Calu3 (cell line): ENCODE measurements at regions of chr15 and their contacts with region 1.

Region 1: GRCh38 chr15:51499379-51499976 is 123.1 kb downstream of the DMXL2 start:
- DNase-seq: peak; percentile 11
- H3K4me3 Mint-ChIP-seq: no peak overlapping the region
- H3K27ac Mint-ChIP-seq: no peak overlapping the region
- H3K4me1 Mint-ChIP-seq: peaks cover 13% of the 10 kb centered on the region
- H3K27me3 Mint-ChIP-seq: no peaks in the 10 kb centered on the region
- CTCF ChIP-seq: peak; percentile 35

Region 2: DNA sequence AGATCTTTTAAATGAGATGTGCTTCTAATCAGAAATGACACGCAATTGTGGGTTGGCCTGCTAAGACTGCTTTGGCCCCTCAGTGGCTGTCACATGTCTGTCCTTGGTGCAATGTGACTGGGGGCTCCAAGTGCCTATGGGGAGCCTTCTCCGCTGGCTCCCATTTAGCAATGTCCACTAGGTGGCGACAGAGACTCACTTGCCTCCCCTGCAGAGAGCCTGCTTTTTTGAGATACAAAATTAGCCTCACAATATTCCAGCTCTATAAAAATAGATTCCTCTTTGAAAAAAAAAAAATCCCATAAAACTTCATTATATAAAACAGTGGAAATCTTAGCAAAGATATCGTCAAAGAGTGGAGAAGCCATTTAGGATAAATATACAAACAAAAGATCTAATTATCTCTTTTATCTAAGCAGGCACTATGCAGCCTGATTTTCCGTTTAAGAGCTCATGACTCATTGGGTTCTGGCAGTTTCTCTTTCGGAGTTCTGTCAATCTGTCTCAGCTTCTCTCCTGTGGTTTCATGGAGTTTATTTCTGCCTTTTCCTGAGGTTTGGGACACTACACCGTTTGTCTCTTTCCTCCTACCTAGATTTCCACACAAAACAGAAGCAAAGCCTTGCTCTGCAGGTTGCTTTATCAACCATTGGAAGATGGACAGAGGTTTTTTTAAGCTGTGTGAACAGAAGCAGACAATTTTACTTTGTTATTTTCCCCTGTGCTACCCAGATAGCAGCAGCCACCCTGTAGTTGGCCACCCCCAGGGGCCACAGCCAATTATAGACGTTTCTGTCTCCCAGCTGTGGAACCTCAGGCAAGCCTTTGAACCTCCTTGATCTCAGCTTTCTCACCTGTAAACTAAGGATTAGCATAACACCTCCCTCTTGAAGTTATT is 336.4 kb before region 1 on chr15:
- CTCF ChIA-PET with region 1: interaction called, 8 read pairs
- intact Hi-C with region 1: loop called (anchors 2 kb)
- DNase-seq: peak; percentile 78
- H3K4me3 Mint-ChIP-seq: no peak overlapping the region
- H3K27ac Mint-ChIP-seq: no peak overlapping the region
- H3K4me1 Mint-ChIP-seq: no peaks in the 10 kb centered on the region
- H3K27me3 Mint-ChIP-seq: peaks cover 70% of the 10 kb centered on the region
- CTCF ChIP-seq: peak; percentile 92

Region 3: GRCh38 chr15:51229907-51230330 is 269.6 kb before region 1 on chr15:
- CTCF ChIA-PET with region 1: no interaction called
- intact Hi-C with region 1: loop called (anchors 2 kb)
- DNase-seq: no peak
- H3K4me3 Mint-ChIP-seq: no peak overlapping the region
- H3K27ac Mint-ChIP-seq: no peak overlapping the region
- H3K4me1 Mint-ChIP-seq: peaks cover 13% of the 10 kb centered on the region
- H3K27me3 Mint-ChIP-seq: no peaks in the 10 kb centered on the region
- CTCF ChIP-seq: no peak

Region 4: DNA sequence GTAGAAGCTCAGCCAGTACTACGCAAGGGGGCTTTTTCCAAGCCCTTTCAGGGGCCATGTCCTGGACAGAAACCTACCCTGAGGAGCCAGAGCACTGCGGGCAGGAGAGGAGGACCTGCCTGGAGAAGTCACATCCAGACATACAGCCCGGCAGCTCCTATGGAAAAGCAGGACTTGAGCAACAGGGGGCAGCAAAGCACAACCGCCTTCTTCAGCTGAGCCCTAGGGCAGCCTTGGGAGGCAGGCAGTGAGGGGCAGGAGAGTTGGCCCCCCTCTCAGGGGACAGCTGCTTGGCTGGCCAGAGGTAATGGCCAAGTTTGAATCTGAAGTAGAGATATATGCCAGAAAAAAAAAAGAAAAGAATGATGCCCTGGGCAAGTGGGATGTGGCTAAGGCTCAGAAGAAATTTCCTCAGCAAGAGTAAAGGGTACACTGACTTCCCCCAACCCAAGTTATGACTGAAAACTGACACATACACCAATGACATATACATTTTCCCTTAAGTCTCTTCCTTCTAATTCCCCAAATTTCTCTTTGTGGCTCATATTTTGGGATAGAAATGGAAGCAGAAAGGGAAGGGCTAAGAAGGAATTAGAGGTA is 218.0 kb before region 1 on chr15:
- CTCF ChIA-PET with region 1: interaction called, 7 read pairs
- intact Hi-C with region 1: loop called (anchors 1 kb)
- DNase-seq: peak; percentile 69
- H3K4me3 Mint-ChIP-seq: no peak overlapping the region
- H3K27ac Mint-ChIP-seq: no peak overlapping the region
- H3K4me1 Mint-ChIP-seq: peaks cover 7% of the 10 kb centered on the region
- H3K27me3 Mint-ChIP-seq: peaks cover 95% of the 10 kb centered on the region
- CTCF ChIP-seq: peak; percentile 64

Region 5: GRCh38 chr15:51401872-51402517 is 97.5 kb before region 1 on chr15:
- CTCF ChIA-PET with region 1: interaction called, 5 read pairs
- intact Hi-C with region 1: loop called (anchors 1 kb)
- DNase-seq: peak; percentile 72
- H3K4me3 Mint-ChIP-seq: no peak overlapping the region
- H3K27ac Mint-ChIP-seq: no peak overlapping the region
- H3K4me1 Mint-ChIP-seq: no peaks in the 10 kb centered on the region
- H3K27me3 Mint-ChIP-seq: peaks cover 88% of the 10 kb centered on the region
- CTCF ChIP-seq: peak; percentile 75

Region 6: DNA sequence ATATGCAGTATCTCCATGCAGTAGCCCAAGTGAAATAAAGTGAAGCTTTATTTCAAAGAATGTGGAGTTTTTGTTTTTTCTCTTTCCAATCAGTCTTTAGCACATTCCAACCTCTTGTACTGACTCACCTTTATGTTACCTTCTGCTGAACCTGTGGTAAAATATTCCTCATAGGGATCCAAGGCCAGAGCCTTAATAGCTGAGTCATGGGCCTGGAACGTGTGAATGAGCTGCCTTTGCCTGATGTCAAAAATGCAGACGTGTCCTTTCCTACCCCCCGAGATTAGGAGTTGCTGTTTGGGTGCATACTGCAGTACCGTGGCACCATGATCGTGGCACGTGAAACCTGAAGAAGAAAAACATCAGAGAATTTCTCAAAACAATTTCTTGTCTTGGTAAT is 49.5 kb before region 1 on chr15:
- CTCF ChIA-PET with region 1: interaction called, 3 read pairs
- intact Hi-C with region 1: loop called (anchors 2 kb)
- DNase-seq: peak; percentile 64
- H3K4me3 Mint-ChIP-seq: peak overlapping the region; percentile 21
- H3K27ac Mint-ChIP-seq: no peak overlapping the region
- H3K4me1 Mint-ChIP-seq: peaks cover 46% of the 10 kb centered on the region
- H3K27me3 Mint-ChIP-seq: no peaks in the 10 kb centered on the region
- CTCF ChIP-seq: no peak

Region 7: GRCh38 chr15:51589867-51590542 is 90.5 kb after region 1 on chr15:
- CTCF ChIA-PET with region 1: no interaction called
- intact Hi-C with region 1: no loop called
- DNase-seq: no peak
- H3K4me3 Mint-ChIP-seq: no peak overlapping the region
- H3K27ac Mint-ChIP-seq: no peak overlapping the region
- H3K4me1 Mint-ChIP-seq: no peaks in the 10 kb centered on the region
- H3K27me3 Mint-ChIP-seq: no peaks in the 10 kb centered on the region
- CTCF ChIP-seq: no peak